Activated naive CD4-positive, alpha-beta T cell treated with anti-CD3 and anti-CD28 coated beads for 36 hours (primary cell): ENCODE measurements at regions of chr1 and their contacts with region 1.

Region 1: GRCh38 chr1:40531381-40532061 is at the start of gene ZNF684:
- DNase-seq: peak; percentile 94
- H3K4me3 Mint-ChIP-seq: peak within 1 kb of the TSS; percentile 99
- H3K27ac Mint-ChIP-seq: peak within 1 kb of the TSS; percentile 91
- H3K4me1 Mint-ChIP-seq: peaks cover 18% of the 10 kb centered on the region
- H3K27me3 Mint-ChIP-seq: peaks cover 4% of the 10 kb centered on the region
- total RNA-seq, gene ZNF684: 6.8 to 7.0 TPM

Region 2: DNA sequence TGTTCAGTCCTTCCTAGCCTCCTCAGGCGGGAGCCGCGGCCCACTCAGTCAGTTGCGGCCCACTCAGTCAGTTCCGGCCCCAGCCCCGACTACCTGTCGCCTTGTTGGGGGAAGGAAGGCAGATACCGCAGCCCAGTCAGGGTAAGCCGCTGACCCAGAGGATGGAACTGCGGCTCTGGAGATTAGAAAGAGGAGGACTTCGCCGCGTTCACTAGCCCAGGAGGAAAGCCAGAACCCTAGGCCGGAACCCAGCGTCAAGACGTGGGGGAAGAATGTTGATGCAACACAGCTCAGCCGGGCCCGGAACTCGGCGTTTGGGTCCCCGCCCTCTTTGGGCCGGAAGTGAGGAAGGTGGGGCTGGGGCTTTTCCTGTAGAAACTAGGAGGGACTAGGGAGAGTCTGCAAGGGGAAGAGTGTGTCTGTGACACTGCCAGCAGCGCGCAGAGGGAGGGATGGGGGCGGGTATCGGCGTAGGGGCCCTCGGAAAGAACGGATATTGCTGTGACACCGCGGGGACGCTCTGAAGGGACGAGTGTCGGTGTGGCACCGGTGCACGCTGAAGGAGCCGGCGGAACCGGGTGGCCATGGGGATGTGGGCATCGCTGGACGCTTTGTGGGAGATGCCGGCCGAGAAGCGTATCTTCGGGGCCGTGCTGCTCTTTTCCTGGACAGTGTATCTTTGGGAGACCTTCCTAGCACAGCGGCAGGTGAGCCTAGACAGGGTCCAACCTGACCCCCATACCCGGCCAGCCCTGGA is 273.7 kb before region 1 on chr1 and contains the start of gene ZMPSTE24:
- CTCF ChIA-PET with region 1: no interaction called
- intact Hi-C with region 1: loop called (anchors 2 kb)
- DNase-seq: peak; percentile 98
- H3K4me3 Mint-ChIP-seq: peak within 1 kb of the TSS; percentile 99
- H3K27ac Mint-ChIP-seq: peak within 1 kb of the TSS; percentile 100
- H3K4me1 Mint-ChIP-seq: peaks cover 35% of the 10 kb centered on the region
- H3K27me3 Mint-ChIP-seq: no peaks in the 10 kb centered on the region
- total RNA-seq, gene ZMPSTE24: 13.2 to 14.7 TPM

Region 3: GRCh38 chr1:40373338-40374283 is 157.9 kb before region 1 on chr1 and contains the start of gene SMAP2:
- CTCF ChIA-PET with region 1: no interaction called
- intact Hi-C with region 1: loop called (anchors 5 kb)
- DNase-seq: peak; percentile 97
- H3K4me3 Mint-ChIP-seq: peak within 1 kb of the TSS; percentile 98
- H3K27ac Mint-ChIP-seq: peak within 1 kb of the TSS; percentile 99
- H3K4me1 Mint-ChIP-seq: peaks cover 46% of the 10 kb centered on the region
- H3K27me3 Mint-ChIP-seq: no peaks in the 10 kb centered on the region
- total RNA-seq, gene SMAP2: 390 to 391 TPM

Region 4: DNA sequence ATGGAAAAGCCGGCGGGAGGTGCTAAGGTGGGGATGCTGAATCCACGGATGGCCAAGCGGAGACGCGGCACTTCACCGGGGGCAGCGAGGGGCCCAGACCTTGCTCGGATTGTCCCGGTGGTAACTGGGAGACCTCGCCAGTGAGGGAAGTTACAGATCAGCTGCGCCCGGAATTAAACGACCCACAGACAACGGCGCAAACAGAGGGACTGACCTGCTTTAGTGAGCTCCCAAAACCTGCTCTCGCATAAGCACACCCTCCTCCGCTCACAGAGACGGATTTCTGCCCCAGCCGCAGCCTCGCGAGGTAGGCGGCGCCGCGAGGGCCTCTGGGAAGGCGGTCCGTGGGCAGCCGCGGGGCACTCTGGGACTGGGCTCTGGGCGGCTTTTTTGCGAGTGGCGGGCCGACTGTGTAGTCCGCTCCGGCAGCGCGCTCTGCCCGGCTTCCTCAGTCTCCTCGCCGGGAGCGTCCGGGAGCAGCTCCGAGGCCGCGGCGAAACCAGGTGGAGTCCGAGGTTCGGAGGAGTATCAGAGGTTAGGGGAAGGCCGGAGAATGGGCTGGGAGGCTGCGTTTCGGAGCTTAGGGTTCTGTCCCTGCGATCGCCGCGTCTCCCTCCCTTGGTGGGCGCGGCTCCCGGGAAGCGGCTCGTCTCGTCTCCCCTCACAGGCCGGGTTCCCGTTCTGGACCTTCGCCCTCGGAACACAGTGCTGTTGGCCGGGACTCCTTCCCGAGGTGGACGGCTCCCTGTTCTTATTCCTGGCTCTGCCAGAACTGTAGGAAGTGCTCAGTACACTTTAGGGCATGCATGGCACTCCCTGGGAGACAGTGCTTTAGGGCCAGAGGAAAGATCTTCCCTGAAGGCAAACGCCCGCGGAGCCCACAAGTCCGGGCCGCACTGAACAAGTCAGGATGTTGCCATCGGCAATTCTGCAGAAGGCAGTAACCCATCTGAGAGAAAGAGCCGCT is 22.9 kb before region 1 on chr1 and contains the start of gene EXO5:
- CTCF ChIA-PET with region 1: interaction called, 3 read pairs
- intact Hi-C with region 1: loop called (anchors 1 kb)
- DNase-seq: peak; percentile 90
- H3K4me3 Mint-ChIP-seq: peak within 1 kb of the TSS; percentile 80
- H3K27ac Mint-ChIP-seq: peak within 1 kb of the TSS; percentile 81
- H3K4me1 Mint-ChIP-seq: peaks cover 10% of the 10 kb centered on the region
- H3K27me3 Mint-ChIP-seq: no peaks in the 10 kb centered on the region
- total RNA-seq, gene EXO5: 9.4 to 9.9 TPM

Region 5: GRCh38 chr1:40553017-40553416 is 21.5 kb after region 1 on chr1:
- CTCF ChIA-PET with region 1: interaction called, 22 read pairs
- intact Hi-C with region 1: no loop called
- DNase-seq: no peak
- H3K4me3 Mint-ChIP-seq: no peak overlapping the region
- H3K27ac Mint-ChIP-seq: no peak overlapping the region
- H3K4me1 Mint-ChIP-seq: no peaks in the 10 kb centered on the region
- H3K27me3 Mint-ChIP-seq: no peaks in the 10 kb centered on the region

Region 6: DNA sequence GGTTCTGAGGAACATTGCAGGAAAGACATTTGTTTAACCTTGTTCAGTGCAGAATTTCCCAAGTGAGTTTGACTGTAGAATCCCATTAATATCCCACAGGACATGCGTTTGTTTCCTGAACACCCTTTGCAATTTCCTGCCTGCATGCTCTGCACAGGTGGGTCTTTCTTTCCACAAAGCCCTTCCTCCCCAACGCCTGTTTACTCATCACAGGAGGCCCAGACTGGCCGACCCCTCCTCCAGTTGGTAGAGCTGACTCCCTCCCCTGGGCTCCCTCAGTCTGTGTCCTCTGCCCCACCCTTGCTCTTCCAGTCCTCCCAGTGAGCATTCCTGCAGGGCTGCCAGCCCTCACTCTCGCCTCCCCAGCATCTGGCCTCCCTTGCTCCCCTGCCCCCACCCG is 400.5 kb after region 1 on chr1:
- CTCF ChIA-PET with region 1: no interaction called
- intact Hi-C with region 1: no loop called
- DNase-seq: no peak
- H3K4me3 Mint-ChIP-seq: no peak overlapping the region
- H3K27ac Mint-ChIP-seq: no peak overlapping the region
- H3K4me1 Mint-ChIP-seq: peaks cover 3% of the 10 kb centered on the region
- H3K27me3 Mint-ChIP-seq: no peaks in the 10 kb centered on the region

Region 7: DNA sequence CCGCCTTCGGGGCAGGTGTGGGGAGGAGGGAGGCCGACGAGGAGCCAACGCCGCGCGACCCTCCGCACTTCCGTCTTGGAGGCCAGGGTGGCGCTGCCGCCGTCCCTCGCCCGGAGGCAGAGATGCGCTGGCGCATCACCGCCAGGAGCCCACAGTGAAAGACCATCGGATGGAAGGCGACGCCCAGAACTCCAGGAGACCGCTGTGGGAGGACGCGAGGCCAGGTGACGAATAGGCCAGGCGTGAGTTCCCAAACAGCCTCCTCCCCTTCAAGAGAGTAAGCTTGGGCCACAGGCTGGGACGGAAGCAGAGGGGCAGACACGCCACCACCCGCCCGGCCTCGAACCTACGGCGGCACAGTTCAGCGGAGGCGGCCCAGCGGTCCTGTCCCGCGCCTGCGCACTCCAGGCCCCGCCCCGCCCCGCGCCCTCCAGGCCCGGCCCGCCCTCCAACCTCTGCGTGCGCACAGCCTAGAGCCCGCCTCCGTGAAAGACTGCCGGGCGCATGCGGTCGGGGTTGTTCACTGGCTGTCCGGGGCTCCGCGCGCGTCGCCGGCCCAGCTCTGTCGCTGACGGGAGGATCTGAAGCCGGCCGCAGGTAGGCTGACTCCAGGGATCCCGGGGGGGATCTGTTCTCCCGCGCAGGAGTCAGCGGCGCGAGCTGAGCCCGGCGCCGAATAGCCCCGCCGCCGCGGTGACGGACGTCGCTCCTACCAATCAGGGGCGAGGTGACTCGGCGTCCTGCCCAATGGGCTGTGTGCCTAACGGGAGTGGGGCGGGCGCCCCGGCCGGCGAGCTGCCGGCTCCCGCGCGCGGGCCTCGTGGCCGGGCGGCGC is 447.9 kb after region 1 on chr1 and contains the start of gene CTPS1:
- CTCF ChIA-PET with region 1: no interaction called
- intact Hi-C with region 1: loop called (anchors 1 kb)
- DNase-seq: peak; percentile 96
- H3K4me3 Mint-ChIP-seq: peak within 1 kb of the TSS; percentile 82
- H3K27ac Mint-ChIP-seq: peak within 1 kb of the TSS; percentile 84
- H3K4me1 Mint-ChIP-seq: peaks cover 40% of the 10 kb centered on the region
- H3K27me3 Mint-ChIP-seq: no peaks in the 10 kb centered on the region
- total RNA-seq, gene CTPS1: 74.9 to 75.1 TPM